ENCODE measurements at regions of chr2 and their contacts with region 1.

Region 1: DNA sequence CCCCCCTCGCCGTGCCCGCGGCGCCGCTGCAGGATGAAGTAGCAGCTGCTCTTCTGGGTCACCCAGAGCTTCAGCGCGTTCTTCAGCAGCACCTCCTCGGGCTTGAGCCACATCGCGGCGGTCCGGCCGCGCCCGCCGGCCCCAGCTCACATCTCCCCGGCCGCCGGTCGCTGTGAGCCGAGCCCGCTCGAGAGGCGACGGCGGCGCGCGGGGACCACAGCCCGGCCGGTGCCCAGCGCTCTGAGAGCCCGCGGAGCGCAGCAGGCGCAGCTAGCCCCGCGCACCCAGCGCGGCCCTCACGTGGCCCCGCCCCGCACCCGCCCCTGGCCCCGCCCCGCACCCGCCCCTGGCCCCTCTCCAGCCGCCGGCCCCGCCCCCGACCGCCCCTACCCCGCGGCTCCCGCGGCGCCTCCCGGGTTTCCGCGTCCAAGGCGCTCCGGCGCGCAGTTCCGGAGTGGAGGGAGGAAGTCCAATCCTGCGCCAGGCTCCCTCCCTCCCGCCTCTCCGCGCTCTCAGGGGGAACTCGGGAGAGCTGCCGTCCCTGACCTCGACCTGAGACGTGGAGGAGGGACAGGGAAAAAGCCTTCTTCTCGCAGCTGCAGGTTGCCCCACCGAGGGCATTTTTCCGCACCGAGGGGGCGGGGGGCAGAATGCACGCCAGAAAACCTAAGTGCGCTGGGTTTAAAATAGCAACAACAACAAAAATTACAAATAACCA is at the start of gene TBC1D8:
- DNase-seq: peak; percentile 95
- H3K4me3 ChIP-seq: peak within 1 kb of the TSS; percentile 78 to 88 (median 84)
- H3K27ac ChIP-seq: peak within 1 kb of the TSS; percentile 83 to 89 (median 86)
- H3K4me1 ChIP-seq: peaks cover 0 to 28% (median 23%) of the 10 kb centered on the region in 4 donors
- H3K27me3 ChIP-seq: no peaks in the 10 kb centered on the region
- CTCF ChIP-seq: no peak
- EP300 ChIP-seq: no peak
- POLR2A ChIP-seq: no peak
- total RNA-seq, gene TBC1D8: 12.8 to 24.1 (median 17.0) TPM

Region 2: DNA sequence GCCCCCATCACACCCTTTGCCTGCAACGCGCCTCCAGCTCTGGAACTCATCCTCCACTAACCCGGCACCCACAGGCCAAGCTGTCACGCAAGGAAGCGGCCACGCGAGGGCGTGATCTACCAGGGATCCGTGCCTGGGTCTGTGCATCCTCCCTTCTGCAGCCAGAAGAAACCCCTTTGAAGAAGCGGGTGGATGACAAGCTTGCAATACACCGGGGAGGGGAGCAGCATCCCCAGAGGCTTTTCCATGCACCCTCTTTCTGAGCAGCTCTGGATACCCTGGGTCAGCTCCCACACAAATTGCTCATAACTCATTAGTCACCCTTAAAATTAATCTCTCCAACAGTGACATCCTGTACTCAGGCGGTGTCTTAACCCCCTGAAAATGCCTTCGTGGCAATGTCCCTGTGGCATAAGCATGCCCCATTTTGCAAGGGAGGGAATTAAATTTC is 540.9 kb before region 1 on chr2:
- intact Hi-C with region 1: loop called (anchors 5 kb)
- DNase-seq: peak; percentile 80
- H3K4me3 ChIP-seq: no peak overlapping the region
- H3K27ac ChIP-seq: no peak overlapping the region
- H3K4me1 ChIP-seq: no peaks in the 10 kb centered on the region
- H3K27me3 ChIP-seq: no peaks in the 10 kb centered on the region
- CTCF ChIP-seq: peak; percentile 37 to 60 (median 43)
- EP300 ChIP-seq: no peak
- POLR2A ChIP-seq: no peak

Region 3: GRCh38 chr2:101012706-101013181 is 138.6 kb before region 1 on chr2:
- intact Hi-C with region 1: loop called (anchors 1 kb)
- DNase-seq: no peak
- H3K4me3 ChIP-seq: no peak overlapping the region
- H3K27ac ChIP-seq: no peak overlapping the region
- H3K4me1 ChIP-seq: peaks cover 0 to 2% (median 0%) of the 10 kb centered on the region in 4 donors
- H3K27me3 ChIP-seq: no peaks in the 10 kb centered on the region
- CTCF ChIP-seq: peak; percentile 62 to 81 (median 71)
- EP300 ChIP-seq: no peak
- POLR2A ChIP-seq: no peak

Region 4: GRCh38 chr2:101036562-101037457 is 114.5 kb before region 1 on chr2:
- intact Hi-C with region 1: loop called (anchors 2 kb)
- DNase-seq: no peak
- H3K4me3 ChIP-seq: no peak overlapping the region
- H3K27ac ChIP-seq: no peak overlapping the region
- H3K4me1 ChIP-seq: no peaks in the 10 kb centered on the region
- H3K27me3 ChIP-seq: no peaks in the 10 kb centered on the region
- CTCF ChIP-seq: peak in 1 of 4 experiments; percentile 47
- EP300 ChIP-seq: no peak
- POLR2A ChIP-seq: no peak

Region 5: DNA sequence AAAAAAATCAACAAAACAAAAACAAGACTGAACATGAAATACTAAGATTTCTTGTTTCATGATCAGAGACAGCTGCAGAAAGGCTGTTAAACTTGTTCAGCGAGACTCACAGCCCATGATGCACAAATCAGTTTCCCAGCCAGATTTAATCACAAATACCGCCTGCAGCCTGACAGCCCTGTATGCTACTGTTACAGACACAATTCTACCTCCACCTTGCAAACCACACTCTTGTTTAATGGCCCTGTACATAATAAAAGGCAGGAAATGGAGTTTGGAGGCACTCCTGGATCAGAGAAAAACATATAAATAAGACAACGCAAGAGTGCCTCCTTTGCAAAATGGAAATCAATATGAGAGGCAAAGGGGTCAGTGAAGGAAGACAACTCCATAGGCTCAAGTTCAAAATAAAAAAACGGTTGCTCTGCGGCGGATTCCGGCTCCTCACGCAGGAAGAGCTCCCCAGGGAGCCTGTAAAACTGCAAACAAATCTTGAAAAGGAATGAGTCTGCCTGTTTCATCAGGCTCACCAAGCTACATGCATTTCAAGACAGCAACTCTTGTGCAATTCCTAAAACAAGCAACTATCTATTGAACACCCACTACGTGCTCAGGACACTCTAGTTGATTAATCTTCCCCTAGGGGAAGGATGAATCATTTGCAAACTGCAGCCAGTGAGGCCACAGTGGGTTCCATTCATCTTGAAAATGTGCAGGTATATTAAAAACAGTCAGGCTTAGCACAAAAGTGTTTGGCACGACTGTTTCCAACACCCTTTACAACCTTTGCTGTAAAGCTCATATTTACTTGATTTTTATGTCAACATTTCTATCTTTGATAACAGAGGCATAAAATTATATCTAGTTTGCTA is 37.7 kb before region 1 on chr2:
- intact Hi-C with region 1: loop called (anchors 5 kb)
- DNase-seq: no peak
- H3K4me3 ChIP-seq: no peak overlapping the region
- H3K27ac ChIP-seq: peak overlapping the region in 3 of 4 donors; percentile 15 to 59 (median 48)
- H3K4me1 ChIP-seq: peaks cover 0 to 54% (median 45%) of the 10 kb centered on the region in 4 donors
- H3K27me3 ChIP-seq: no peaks in the 10 kb centered on the region
- CTCF ChIP-seq: no peak
- EP300 ChIP-seq: no peak
- POLR2A ChIP-seq: no peak

Region 6: GRCh38 chr2:101205521-101205998 is 54.3 kb after region 1 on chr2:
- intact Hi-C with region 1: loop called (anchors 5 kb)
- DNase-seq: peak; percentile 81
- H3K4me3 ChIP-seq: peak overlapping the region in 3 of 4 donors; percentile 21 to 34 (median 32)
- H3K27ac ChIP-seq: no peak overlapping the region
- H3K4me1 ChIP-seq: peaks cover 0 to 5% (median 2%) of the 10 kb centered on the region in 4 donors
- H3K27me3 ChIP-seq: no peaks in the 10 kb centered on the region
- CTCF ChIP-seq: peak; percentile 6 to 58 (median 32)
- EP300 ChIP-seq: no peak
- POLR2A ChIP-seq: no peak

Region 7: GRCh38 chr2:101252408-101253012 is 101.2 kb after region 1 on chr2 and contains the start of gene CNOT11:
- intact Hi-C with region 1: loop called (anchors 2 kb)
- DNase-seq: peak; percentile 99
- H3K4me3 ChIP-seq: peak within 1 kb of the TSS; percentile 80 to 99 (median 98)
- H3K27ac ChIP-seq: peak within 1 kb of the TSS; percentile 88 to 97 (median 94)
- H3K4me1 ChIP-seq: peaks cover 0 to 33% (median 31%) of the 10 kb centered on the region in 4 donors
- H3K27me3 ChIP-seq: no peaks in the 10 kb centered on the region
- CTCF ChIP-seq: peak in 1 of 4 experiments; percentile 8
- EP300 ChIP-seq: no peak
- POLR2A ChIP-seq: peak; percentile 49 to 74
- total RNA-seq, gene CNOT11: 21.4 to 27.4 (median 22.1) TPM

Region 8: GRCh38 chr2:101432411-101433181 is 281.3 kb after region 1 on chr2:
- intact Hi-C with region 1: no loop called
- DNase-seq: no peak
- H3K4me3 ChIP-seq: no peak overlapping the region
- H3K27ac ChIP-seq: no peak overlapping the region
- H3K4me1 ChIP-seq: peaks cover 0 to 10% (median 3%) of the 10 kb centered on the region in 4 donors
- H3K27me3 ChIP-seq: no peaks in the 10 kb centered on the region
- CTCF ChIP-seq: no peak
- EP300 ChIP-seq: no peak
- POLR2A ChIP-seq: no peak

Measured in sigmoid colon (tissue), 7 donors.